Activated CD4-positive, alpha-beta memory T cell treated with anti-CD3 and anti-CD28 coated beads, Interleukin-2, amount 10 ng/mL, durations not matched to agents 7 days and 5 days (primary cell): ENCODE measurements at regions of chr12 and their contacts with region 1.

Region 1: GRCh38 chr12:123938679-123939480 is 33.8 kb downstream of the CCDC92 start:
- DNase-seq: no peak
- H3K4me3 Mint-ChIP-seq: peak overlapping the region; percentile 65
- H3K27ac Mint-ChIP-seq: peak overlapping the region; percentile 68
- H3K4me1 Mint-ChIP-seq: peaks cover 25% of the 10 kb centered on the region
- H3K27me3 Mint-ChIP-seq: no peaks in the 10 kb centered on the region

Region 2: DNA sequence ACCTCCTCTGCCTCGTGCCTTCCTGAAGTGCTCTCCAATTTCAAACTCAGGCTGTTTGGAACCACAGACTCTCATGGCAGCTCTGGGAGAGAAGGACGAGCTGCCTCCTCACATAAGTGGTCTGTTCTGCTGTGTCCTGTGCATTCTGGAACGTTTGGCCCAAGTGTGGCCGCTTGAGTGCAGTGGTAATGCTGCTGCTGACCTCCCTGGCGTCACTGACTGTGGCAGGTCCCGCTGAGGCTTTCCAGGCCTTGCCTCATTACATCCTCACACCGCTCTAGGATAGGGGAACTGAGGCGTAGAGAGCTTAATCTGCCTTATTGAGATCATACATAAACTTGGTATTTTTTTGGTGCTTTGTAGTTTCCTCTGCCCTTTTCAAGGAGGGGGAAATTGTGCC is 19.6 kb after region 1 on chr12:
- CTCF ChIA-PET with region 1: no interaction called
- POLR2A ChIA-PET with region 1: no interaction called
- DNase-seq: no peak
- H3K4me3 Mint-ChIP-seq: no peak overlapping the region
- H3K27ac Mint-ChIP-seq: no peak overlapping the region
- H3K4me1 Mint-ChIP-seq: no peaks in the 10 kb centered on the region
- H3K27me3 Mint-ChIP-seq: no peaks in the 10 kb centered on the region

Region 3: GRCh38 chr12:123972457-123973401 is 33.8 kb after region 1 on chr12 and contains the starts of genes CCDC92 and ZNF664:
- CTCF ChIA-PET with region 1: interaction called, 5 read pairs
- POLR2A ChIA-PET with region 1: interaction called, 19 read pairs
- DNase-seq: peak; percentile 94
- H3K4me3 Mint-ChIP-seq: peak within 1 kb of the TSS; percentile 91
- H3K27ac Mint-ChIP-seq: peak within 1 kb of the TSS; percentile 65
- H3K4me1 Mint-ChIP-seq: peaks cover 38% of the 10 kb centered on the region
- H3K27me3 Mint-ChIP-seq: no peaks in the 10 kb centered on the region
- total RNA-seq, gene CCDC92: 20.3 to 20.5 TPM
- total RNA-seq, gene ZNF664: 42.5 to 43.4 TPM